Stomach (tissue), 19 donors: ENCODE measurements at regions of chr10 and their contacts with region 1.

Region 1: GRCh38 chr10:70296406-70296899 is 12.6 kb upstream of the NPFFR1 start:
- DNase-seq: peak; percentile 70 to 71
- H3K4me3 ChIP-seq: no peak overlapping the region
- H3K27ac ChIP-seq: peak overlapping the region in 4 of 5 donors; percentile 45 to 76 (median 56)
- H3K4me1 ChIP-seq: peaks cover 0 to 14% (median 9%) of the 10 kb centered on the region in 4 donors
- H3K27me3 ChIP-seq: no peaks in the 10 kb centered on the region
- CTCF ChIP-seq: no peak
- EP300 ChIP-seq: no peak
- POLR2A ChIP-seq: no peak

Region 2: DNA sequence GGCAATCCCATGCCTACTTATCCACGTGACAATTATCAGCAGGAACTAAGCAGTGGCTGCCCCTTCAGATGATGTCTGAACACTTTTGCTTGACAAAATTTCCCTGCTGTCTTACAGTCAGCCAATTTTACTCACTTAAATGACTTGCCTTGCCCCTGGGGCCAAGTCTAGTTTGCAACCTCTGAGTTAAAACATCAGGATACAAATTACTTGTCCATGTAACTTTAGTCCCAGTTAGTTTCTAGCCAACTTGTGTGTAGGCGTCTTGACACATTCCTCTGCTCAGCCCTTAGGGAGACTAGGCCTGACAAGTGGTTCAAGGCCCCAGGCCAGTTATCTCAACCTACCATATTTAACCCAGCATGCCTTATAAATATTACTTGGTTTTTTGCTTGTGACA is 138.3 kb before region 1 on chr10:
- intact Hi-C with region 1: no loop called
- DNase-seq: no peak
- H3K4me3 ChIP-seq: no peak overlapping the region
- H3K27ac ChIP-seq: no peak overlapping the region
- H3K4me1 ChIP-seq: peaks cover 8 to 48% (median 23%) of the 10 kb centered on the region in 4 donors
- H3K27me3 ChIP-seq: no peaks in the 10 kb centered on the region
- CTCF ChIP-seq: no peak
- EP300 ChIP-seq: no peak
- POLR2A ChIP-seq: no peak

Region 3: DNA sequence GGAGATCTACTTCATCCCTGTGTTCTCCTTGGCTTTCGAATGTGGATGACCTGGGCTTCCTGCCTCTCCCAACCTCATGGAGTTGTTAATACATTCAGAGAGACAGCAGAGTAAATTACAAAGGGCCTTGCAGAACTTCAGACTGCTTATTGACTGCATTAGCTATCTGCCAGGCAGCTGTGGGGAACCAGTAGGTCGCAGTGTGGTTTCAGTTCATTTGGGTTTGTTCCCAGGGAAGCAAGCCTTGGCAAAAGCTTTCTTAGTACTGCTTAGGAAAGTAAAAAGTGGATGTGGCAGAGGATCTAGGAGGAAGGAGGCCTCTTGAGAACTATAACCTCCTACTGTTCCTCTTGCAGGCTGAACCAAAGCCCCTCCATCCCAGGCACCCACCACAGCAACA is 21.8 kb before region 1 on chr10:
- intact Hi-C with region 1: loop called (anchors 2 kb)
- DNase-seq: no peak
- H3K4me3 ChIP-seq: no peak overlapping the region
- H3K27ac ChIP-seq: no peak overlapping the region
- H3K4me1 ChIP-seq: peaks cover 0 to 13% (median 11%) of the 10 kb centered on the region in 4 donors
- H3K27me3 ChIP-seq: no peaks in the 10 kb centered on the region
- CTCF ChIP-seq: no peak
- EP300 ChIP-seq: no peak
- POLR2A ChIP-seq: no peak

Region 4: GRCh38 chr10:70786799-70787415 is 490.5 kb after region 1 on chr10:
- intact Hi-C with region 1: no loop called
- DNase-seq: no peak
- H3K4me3 ChIP-seq: no peak overlapping the region
- H3K27ac ChIP-seq: no peak overlapping the region
- H3K4me1 ChIP-seq: no peaks in the 10 kb centered on the region
- H3K27me3 ChIP-seq: peaks cover 0 to 6% (median 0%) of the 10 kb centered on the region in 3 donors
- CTCF ChIP-seq: no peak
- EP300 ChIP-seq: no peak
- POLR2A ChIP-seq: no peak